ENCODE measurements at regions of chr1 and their contacts with region 1.

Region 1: GRCh38 chr1:76317299-76317900 is 242.9 kb downstream of the ST6GALNAC3 start:
- DNase-seq: no peak
- ATAC-seq: no peak

Region 2: GRCh38 chr1:76095802-76096201 is 221.6 kb before region 1 on chr1:
- intact Hi-C with region 1: no loop called
- DNase-seq: no peak
- ATAC-seq: no peak

Region 3: GRCh38 chr1:76209238-76209637 is 108.2 kb before region 1 on chr1:
- intact Hi-C with region 1: loop called (anchors 5 kb)
- DNase-seq: no peak
- ATAC-seq: no peak

Measured in Right ventricle myocardium superior (tissue), 1 donor.